Posterior vena cava (tissue), 2 donors: ENCODE measurements at regions of chr5 and their contacts with region 1.

Region 1: GRCh38 chr5:97231025-97231636 is 48.1 kb upstream of the RIOK2 start:
- DNase-seq: no peak

Region 2: DNA sequence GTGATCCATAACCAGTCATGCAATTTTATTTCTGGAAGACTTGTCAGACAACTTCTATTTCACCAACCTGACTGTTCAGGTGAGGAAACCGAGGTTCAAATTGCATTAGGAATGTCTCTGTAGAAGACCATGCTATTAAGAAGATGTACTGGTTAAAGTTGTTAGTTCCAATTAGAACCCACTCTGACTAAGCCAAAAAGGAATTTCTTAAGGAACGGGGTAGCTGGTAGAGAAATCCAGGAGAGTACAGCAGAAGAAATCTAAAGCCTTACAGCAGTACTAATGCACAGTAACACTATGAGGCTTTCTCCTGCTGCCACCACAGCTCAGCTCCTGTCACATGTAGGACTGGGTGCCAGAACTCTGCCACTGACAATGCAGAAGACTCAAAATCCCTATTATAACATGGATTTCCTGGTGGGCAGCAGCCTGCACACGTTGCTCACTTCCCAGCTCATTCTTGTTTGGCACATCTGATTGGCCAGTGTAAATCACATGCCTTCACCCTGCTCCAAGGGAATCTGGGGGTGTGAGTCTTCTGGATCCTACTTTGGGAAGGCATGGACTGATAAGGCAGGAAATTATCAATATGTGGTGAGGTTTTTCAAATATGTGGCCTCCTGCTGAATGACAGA is 531.8 kb before region 1 on chr5:
- intact Hi-C with region 1: loop called in 1 of 2 experiments (anchors 5 kb)
- DNase-seq: no peak